Naive thymus-derived CD4-positive, alpha-beta T cell (primary cell): ENCODE measurements at regions of chr9 and their contacts with region 1.

Region 1: DNA sequence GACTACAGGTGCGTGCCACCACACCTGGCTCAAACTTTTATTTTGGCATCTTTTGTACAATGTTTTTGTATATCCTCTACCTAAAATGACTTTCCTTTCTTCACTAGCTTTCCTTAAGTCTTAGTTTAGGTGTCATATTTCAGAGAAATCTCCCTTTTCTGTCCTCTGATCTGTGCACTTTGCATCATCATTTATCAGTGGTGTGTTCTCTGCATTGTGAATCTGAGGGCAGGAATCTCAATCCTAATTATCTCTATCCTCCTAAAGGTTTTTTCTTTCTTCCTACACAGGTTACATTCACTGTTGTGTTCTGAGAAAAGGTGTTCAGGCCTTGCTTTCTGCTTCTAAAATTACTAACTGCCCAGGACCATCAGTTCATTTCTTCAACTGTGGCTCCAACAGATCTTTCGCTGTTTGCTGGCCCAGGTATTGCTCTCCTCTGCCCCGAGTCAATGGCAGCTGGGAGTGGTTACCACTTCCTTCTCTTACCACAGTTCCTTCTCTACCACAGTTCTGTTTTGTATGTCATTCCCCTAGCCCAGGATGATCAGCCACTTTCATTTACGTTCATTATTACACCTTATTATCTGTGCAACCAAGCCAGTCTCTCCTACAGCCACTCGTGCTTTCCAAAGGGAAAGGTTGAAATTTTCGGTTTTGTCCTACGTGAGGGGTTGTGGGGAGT is 14.0 kb downstream of the TGFBR1 start:
- DNase-seq: peak in 8 of 9 donors; percentile 40 to 79 (median 70)
- ATAC-seq: peak; percentile 99
- H3K4me3 ChIP-seq: peak overlapping the region; percentile 39
- H3K4me3 Mint-ChIP-seq: peak overlapping the region; percentile 69 to 92 (median 82)
- H3K27ac ChIP-seq: peak overlapping the region; percentile 62
- H3K27ac Mint-ChIP-seq: peak overlapping the region; percentile 39 to 96 (median 86)
- H3K4me1 ChIP-seq: peaks cover 59 to 76% of the 10 kb centered on the region in 2 donors
- H3K4me1 Mint-ChIP-seq: peaks cover 57 to 97% (median 89%) of the 10 kb centered on the region in 7 donors
- H3K27me3 ChIP-seq: no peaks in the 10 kb centered on the region
- H3K27me3 Mint-ChIP-seq: no peaks in the 10 kb centered on the region

Region 2: DNA sequence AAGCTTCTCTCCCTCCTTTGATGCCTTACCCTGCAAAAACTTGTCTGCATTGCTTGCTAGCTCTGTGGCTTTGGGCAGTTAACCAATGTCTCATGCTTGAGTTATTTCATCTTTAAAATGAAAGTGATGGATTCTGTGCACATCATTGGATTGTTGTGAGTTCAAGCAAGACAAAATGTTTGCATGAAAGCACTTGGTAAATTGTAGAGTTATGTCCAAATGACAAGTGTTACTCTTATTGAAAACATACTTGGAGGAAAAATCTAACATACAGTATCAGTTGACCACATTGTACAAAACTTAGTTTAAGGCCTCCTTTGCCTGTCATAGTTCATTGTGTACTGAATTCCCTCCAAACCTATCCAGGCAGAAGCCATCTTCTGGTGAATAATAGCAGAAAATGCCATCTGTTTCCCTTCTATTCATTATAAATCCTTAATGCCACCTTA is 16.0 kb after region 1 on chr9:
- CTCF ChIA-PET with region 1: interaction called, 16 read pairs
- POLR2A ChIA-PET with region 1: interaction called, 73 read pairs
- intact Hi-C with region 1: loop called in 1 of 2 experiments (anchors 1 kb)
- DNase-seq: peak in 7 of 9 donors; percentile 32 to 54 (median 42)
- ATAC-seq: peak; percentile 67
- H3K4me3 ChIP-seq: peak overlapping the region; percentile 32
- H3K4me3 Mint-ChIP-seq: peak overlapping the region; percentile 61 to 82 (median 74)
- H3K27ac ChIP-seq: peak overlapping the region; percentile 50
- H3K27ac Mint-ChIP-seq: peak overlapping the region; percentile 72 to 96 (median 89)
- H3K4me1 ChIP-seq: peaks cover 21 to 53% of the 10 kb centered on the region in 2 donors
- H3K4me1 Mint-ChIP-seq: peaks cover 48 to 95% (median 90%) of the 10 kb centered on the region in 7 donors
- H3K27me3 ChIP-seq: no peaks in the 10 kb centered on the region
- H3K27me3 Mint-ChIP-seq: no peaks in the 10 kb centered on the region

Region 3: GRCh38 chr9:99385814-99386279 is 266.9 kb after region 1 on chr9:
- CTCF ChIA-PET with region 1: no interaction called
- POLR2A ChIA-PET with region 1: no interaction called
- intact Hi-C with region 1: no loop called
- DNase-seq: no peak
- ATAC-seq: no peak
- H3K4me3 ChIP-seq: no peak overlapping the region
- H3K4me3 Mint-ChIP-seq: no peak overlapping the region
- H3K27ac ChIP-seq: no peak overlapping the region
- H3K27ac Mint-ChIP-seq: no peak overlapping the region
- H3K4me1 ChIP-seq: no peaks in the 10 kb centered on the region
- H3K4me1 Mint-ChIP-seq: no peaks in the 10 kb centered on the region
- H3K27me3 ChIP-seq: no peaks in the 10 kb centered on the region
- H3K27me3 Mint-ChIP-seq: peaks cover 8 to 28% (median 12%) of the 10 kb centered on the region in 5 donors